Tibial artery (tissue), 4 donors: ENCODE measurements at regions of chr18 and their contacts with region 1.

Region 1: GRCh38 chr18:24118750-24119577 is 19.9 kb upstream of the CABYR start:
- DNase-seq: peak; percentile 66 to 82
- H3K4me3 ChIP-seq: no peak overlapping the region
- H3K27ac ChIP-seq: no peak overlapping the region
- H3K4me1 ChIP-seq: no peaks in the 10 kb centered on the region
- H3K27me3 ChIP-seq: no peaks in the 10 kb centered on the region
- CTCF ChIP-seq: peak; percentile 81 to 89

Region 2: DNA sequence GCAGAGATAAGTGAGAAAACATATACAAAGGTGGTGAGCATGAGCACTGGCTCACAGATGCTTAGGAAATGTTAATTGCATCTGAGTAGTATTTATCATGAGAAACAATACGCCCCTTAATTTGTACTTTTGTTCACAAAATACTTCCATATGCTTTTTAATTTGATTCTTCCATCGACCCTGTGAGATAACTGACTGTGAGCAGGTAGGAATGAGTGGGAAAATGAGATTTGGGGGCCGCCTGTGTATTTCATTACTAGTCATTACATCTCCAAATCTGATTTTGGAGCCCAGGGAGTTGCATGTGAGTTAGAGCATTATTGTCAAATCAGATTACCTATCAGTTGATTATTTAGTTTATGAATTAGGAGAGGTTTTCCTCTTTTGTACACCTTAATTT is 495.9 kb before region 1 on chr18:
- intact Hi-C with region 1: loop called (anchors 5 kb)
- DNase-seq: no peak
- H3K4me3 ChIP-seq: no peak overlapping the region
- H3K27ac ChIP-seq: no peak overlapping the region
- H3K4me1 ChIP-seq: peaks cover 0 to 25% (median 12%) of the 10 kb centered on the region in 4 donors
- H3K27me3 ChIP-seq: peaks cover 0 to 18% of the 10 kb centered on the region in 2 donors
- CTCF ChIP-seq: no peak

Region 3: GRCh38 chr18:23857756-23858155 is 261.2 kb before region 1 on chr18:
- intact Hi-C with region 1: no loop called
- DNase-seq: no peak
- H3K4me3 ChIP-seq: no peak overlapping the region
- H3K27ac ChIP-seq: no peak overlapping the region
- H3K4me1 ChIP-seq: peaks cover 0 to 18% (median 5%) of the 10 kb centered on the region in 4 donors
- H3K27me3 ChIP-seq: no peaks in the 10 kb centered on the region
- CTCF ChIP-seq: no peak